HepG2 (cell line): ENCODE measurements at regions of chr5 and their contacts with region 1.

Region 1: DNA sequence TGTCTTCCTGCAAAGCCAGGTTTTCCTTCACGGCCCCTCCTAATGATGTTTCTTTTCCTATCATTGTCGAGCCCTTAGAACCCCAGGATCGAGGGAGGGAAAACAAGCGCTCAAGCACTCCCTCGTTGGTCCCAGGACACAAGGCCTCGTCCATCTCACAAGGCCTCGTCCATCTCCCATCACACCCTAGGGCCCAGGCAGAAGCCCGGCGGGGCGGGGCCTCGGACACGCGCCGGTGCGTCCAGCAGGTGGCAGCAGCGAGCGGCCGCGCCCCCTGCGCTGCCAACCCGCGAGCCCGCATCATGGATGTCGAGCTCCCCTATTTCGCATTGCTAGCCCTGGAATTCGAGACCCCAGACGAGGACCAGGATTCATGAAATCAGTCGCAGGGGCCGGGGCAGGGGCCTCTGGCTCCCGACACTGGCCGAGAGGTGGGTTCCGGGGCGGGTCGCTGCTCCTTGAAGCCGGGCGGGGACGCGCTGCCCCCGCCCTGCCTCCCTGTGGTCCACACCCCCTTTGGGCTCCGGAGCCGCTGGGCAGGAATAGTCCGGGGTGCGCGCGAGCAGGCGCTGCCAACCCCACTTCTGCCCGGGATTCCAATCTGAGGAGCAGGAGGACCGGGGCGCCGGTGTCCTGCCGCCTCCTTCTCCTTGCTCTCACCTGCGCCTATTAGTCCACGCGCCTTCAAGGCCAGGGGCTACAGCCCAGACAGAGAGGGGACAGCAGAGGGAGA is at the start of gene ABLIM3:
- DNase-seq: no peak
- ATAC-seq: peak; percentile 89
- H3K4me3 ChIP-seq: peak within 1 kb of the TSS; percentile 63 to 82 (median 71)
- H3K27ac ChIP-seq: no peak within 1 kb of the TSS
- H3K4me1 ChIP-seq: peaks cover 46% of the 10 kb centered on the region
- H3K27me3 ChIP-seq: peaks cover 0 to 11% of the 10 kb centered on the region in 2 experiments; a peak in 4 of 5 replicates
- CTCF ChIP-seq: peak; percentile 87
- EP300 ChIP-seq: no peak
- POLR2A ChIP-seq: no peak
- RAD21 ChIP-seq: peak; percentile 90
- total RNA-seq, gene ABLIM3: 0.53 and 0.67 TPM in 2 replicates

Region 2: DNA sequence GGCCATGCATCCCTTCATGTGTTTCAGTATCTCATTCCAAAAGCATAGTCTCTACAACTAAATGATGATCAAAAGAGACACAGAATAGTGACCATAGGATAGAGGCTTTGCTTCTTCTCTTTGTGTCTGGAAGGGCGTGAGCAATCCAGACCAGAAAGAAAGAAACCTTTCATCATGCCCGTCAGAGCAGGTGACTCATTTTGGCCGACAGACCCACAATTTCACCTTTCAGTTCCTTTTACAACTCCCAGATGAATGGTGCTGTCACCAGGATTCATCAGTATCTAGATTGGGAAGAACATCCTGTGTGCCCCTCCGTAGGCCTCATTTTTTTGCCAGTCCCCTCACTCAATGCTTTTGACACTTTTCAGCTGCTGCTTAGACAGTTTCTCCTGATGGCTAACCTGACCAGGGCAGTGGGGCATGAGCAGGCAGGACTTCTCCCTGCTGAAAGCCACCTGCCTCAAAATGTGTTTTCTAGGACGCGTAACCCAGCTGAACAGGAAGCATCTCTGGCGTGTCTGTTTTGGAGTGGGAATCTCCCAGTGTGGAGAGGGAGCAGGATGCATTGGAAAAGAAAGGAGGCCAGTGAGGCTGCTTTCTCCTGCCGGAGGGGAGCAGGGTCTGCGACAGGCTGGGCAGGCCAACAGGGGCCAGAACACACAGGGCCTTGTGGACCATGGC is 21.2 kb after region 1 on chr5:
- CTCF ChIA-PET with region 1: no interaction called
- POLR2A ChIA-PET with region 1: interaction called, 35 read pairs
- in situ Hi-C with region 1: no loop called
- intact Hi-C with region 1: no loop called
- DNase-seq: peak; percentile 75
- ATAC-seq: peak; percentile 31; the same call in 2 of the 3 replicates
- H3K4me3 ChIP-seq: peak overlapping the region in 1 of 3 experiments; percentile 70; a peak in 2 of 6 replicates
- H3K27ac ChIP-seq: peak overlapping the region; percentile 87
- H3K4me1 ChIP-seq: peaks cover 64% of the 10 kb centered on the region
- H3K27me3 ChIP-seq: no peaks in the 10 kb centered on the region
- CTCF ChIP-seq: no peak
- EP300 ChIP-seq: peak in 1 of 2 experiments; percentile 19; a peak in 1 of 4 replicates
- POLR2A ChIP-seq: no peak
- RAD21 ChIP-seq: no peak

Region 3: GRCh38 chr5:149195337-149195887 is 54.0 kb after region 1 on chr5:
- CTCF ChIA-PET with region 1: no interaction called
- POLR2A ChIA-PET with region 1: no interaction called
- in situ Hi-C with region 1: no loop called
- intact Hi-C with region 1: loop called (anchors 1 kb)
- DNase-seq: no peak
- ATAC-seq: no peak
- H3K4me3 ChIP-seq: no peak overlapping the region
- H3K27ac ChIP-seq: no peak overlapping the region
- H3K4me1 ChIP-seq: peaks cover 13% of the 10 kb centered on the region
- H3K27me3 ChIP-seq: no peaks in the 10 kb centered on the region
- CTCF ChIP-seq: no peak
- EP300 ChIP-seq: no peak
- POLR2A ChIP-seq: no peak
- RAD21 ChIP-seq: no peak

Region 4: DNA sequence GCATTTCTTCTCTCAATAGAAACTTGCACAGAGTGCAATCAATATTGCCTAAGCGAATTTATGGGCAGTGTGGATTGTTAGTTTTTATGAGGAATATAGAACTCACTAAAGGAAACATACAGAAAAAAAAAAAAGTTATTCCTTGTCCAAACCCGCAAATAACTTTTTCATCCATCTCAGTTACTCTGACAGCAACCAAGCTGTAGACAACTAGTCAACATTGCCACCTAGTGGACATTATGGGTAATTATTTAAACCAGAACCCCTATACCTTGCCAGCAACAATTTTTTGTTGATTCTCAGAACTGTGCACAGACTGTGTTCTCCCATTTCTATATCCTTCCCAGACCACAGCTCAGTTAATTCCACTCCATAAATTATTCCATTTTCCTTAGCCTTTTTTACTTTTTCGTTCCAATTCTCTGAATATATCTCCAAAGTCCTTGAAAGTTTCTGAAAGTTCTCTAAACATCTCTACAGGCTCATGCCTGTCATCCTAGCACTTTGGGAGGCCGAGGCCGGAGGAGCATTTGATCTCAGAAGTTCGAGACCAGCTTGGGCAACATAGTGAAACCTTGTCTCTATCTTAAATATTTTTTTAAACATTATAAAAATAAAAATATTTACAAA is 127.7 kb after region 1 on chr5:
- CTCF ChIA-PET with region 1: interaction called, 5 read pairs
- POLR2A ChIA-PET with region 1: no interaction called
- in situ Hi-C with region 1: no loop called
- intact Hi-C with region 1: loop called (anchors 5 kb)
- DNase-seq: peak; percentile 49
- ATAC-seq: no peak
- H3K4me3 ChIP-seq: no peak overlapping the region
- H3K27ac ChIP-seq: no peak overlapping the region
- H3K4me1 ChIP-seq: peaks cover 29% of the 10 kb centered on the region
- H3K27me3 ChIP-seq: peaks cover 7 to 23% of the 10 kb centered on the region in 2 experiments
- CTCF ChIP-seq: peak; percentile 71
- EP300 ChIP-seq: no peak
- POLR2A ChIP-seq: no peak
- RAD21 ChIP-seq: no peak

Region 5: GRCh38 chr5:149561848-149562247 is 420.5 kb after region 1 on chr5:
- CTCF ChIA-PET with region 1: no interaction called
- POLR2A ChIA-PET with region 1: no interaction called
- in situ Hi-C with region 1: loop called (anchors 25 kb)
- intact Hi-C with region 1: loop called (anchors 10 kb)
- DNase-seq: peak; percentile 36
- ATAC-seq: no peak
- H3K4me3 ChIP-seq: no peak overlapping the region
- H3K27ac ChIP-seq: no peak overlapping the region
- H3K4me1 ChIP-seq: peaks cover 16% of the 10 kb centered on the region
- H3K27me3 ChIP-seq: no peaks in the 10 kb centered on the region
- CTCF ChIP-seq: no peak
- EP300 ChIP-seq: no peak
- POLR2A ChIP-seq: no peak
- RAD21 ChIP-seq: no peak